Dendritic cell treated with granulocyte-macrophage colony-stimulating factor and Interleukin-4, amounts not matched to agents 40 ng/mL and 50 ng/mL, for 4 days (primary cell): ENCODE measurements at regions of chr2 and their contacts with region 1.

Region 1: GRCh38 chr2:20225294-20226151 is 593 bp upstream of the SDC1 start:
- H3K4me3 Mint-ChIP-seq: peak overlapping the region; percentile 57
- H3K27ac Mint-ChIP-seq: no peak overlapping the region
- H3K4me1 Mint-ChIP-seq: peaks cover 8% of the 10 kb centered on the region
- H3K27me3 Mint-ChIP-seq: peaks cover 68% of the 10 kb centered on the region

Region 2: GRCh38 chr2:20135631-20136050 is 89.9 kb before region 1 on chr2:
- intact Hi-C with region 1: loop called (anchors 10 kb)
- H3K4me3 Mint-ChIP-seq: no peak overlapping the region
- H3K27ac Mint-ChIP-seq: no peak overlapping the region
- H3K4me1 Mint-ChIP-seq: no peaks in the 10 kb centered on the region
- H3K27me3 Mint-ChIP-seq: peaks cover 8% of the 10 kb centered on the region

Region 3: GRCh38 chr2:20381444-20381843 is 155.9 kb after region 1 on chr2:
- intact Hi-C with region 1: no loop called
- H3K4me3 Mint-ChIP-seq: no peak overlapping the region
- H3K27ac Mint-ChIP-seq: no peak overlapping the region
- H3K4me1 Mint-ChIP-seq: peaks cover 10% of the 10 kb centered on the region
- H3K27me3 Mint-ChIP-seq: peaks cover 12% of the 10 kb centered on the region